Colonic mucosa (tissue), 4 donors: ENCODE measurements at regions of chr17 and their contacts with region 1.

Region 1: DNA sequence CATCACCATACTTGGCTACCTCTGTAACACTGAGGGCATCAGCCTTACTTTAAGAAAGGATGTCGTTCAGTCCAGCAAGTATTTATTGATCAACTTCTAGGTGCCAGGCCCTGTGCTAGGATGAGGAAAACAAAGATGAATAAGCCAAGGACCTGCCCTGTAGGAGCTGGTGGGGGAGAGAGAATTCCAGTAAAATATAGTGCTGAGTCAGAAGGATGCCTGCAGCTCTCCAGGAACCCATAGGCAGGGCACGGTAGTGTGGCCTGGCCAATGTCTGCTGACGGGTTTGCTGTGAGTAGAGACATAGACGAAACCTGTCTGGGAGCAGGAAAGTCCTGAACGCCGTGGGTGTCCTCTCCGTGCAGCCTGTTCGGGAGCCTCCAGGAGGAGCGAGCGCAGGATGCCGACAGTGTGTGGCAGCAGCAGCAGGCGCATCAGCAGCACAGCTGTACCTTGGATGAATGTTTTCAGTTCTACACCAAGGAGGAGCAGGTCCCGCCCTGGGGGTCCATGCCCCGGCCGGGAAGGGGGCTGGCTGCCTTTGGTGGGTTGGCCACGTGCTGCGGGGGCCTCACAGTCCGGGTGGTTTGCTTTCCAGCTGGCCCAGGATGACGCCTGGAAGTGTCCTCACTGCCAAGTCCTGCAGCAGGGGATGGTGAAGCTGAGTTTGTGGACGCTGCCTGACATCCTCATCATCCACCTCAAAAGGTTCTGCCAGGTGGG is 55.6 kb downstream of the USP43 start:
- DNase-seq: no peak
- H3K4me3 ChIP-seq: no peak overlapping the region
- H3K27ac ChIP-seq: no peak overlapping the region
- H3K4me1 ChIP-seq: no peaks in the 10 kb centered on the region
- H3K27me3 ChIP-seq: no peaks in the 10 kb centered on the region
- CTCF ChIP-seq: no peak

Region 2: DNA sequence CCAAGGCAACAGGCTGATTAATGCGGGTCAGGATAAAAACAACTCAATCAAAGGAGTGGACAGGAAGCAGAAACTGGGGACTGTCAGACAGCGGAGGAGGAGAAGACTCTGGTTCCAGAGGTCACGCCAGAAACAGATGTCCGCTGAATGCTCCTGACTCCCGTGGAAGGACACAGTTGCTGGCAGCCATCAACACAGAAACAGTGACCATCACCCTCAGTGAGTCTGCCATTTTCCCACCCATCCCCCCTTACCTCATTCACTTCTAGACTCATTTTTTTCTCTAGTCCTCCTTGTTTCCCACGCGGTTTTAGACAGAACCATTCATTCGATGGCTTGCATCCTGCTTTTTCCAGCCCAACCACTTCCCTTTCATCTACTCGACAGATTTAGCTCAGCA is 49.6 kb after region 1 on chr17:
- intact Hi-C with region 1: loop called (anchors 5 kb)
- DNase-seq: no peak
- H3K4me3 ChIP-seq: no peak overlapping the region
- H3K27ac ChIP-seq: no peak overlapping the region
- H3K4me1 ChIP-seq: no peaks in the 10 kb centered on the region
- H3K27me3 ChIP-seq: no peaks in the 10 kb centered on the region
- CTCF ChIP-seq: no peak